CD8-positive, alpha-beta T cell (primary cell): ENCODE measurements at regions of chr2 and their contacts with region 1.

Region 1: DNA sequence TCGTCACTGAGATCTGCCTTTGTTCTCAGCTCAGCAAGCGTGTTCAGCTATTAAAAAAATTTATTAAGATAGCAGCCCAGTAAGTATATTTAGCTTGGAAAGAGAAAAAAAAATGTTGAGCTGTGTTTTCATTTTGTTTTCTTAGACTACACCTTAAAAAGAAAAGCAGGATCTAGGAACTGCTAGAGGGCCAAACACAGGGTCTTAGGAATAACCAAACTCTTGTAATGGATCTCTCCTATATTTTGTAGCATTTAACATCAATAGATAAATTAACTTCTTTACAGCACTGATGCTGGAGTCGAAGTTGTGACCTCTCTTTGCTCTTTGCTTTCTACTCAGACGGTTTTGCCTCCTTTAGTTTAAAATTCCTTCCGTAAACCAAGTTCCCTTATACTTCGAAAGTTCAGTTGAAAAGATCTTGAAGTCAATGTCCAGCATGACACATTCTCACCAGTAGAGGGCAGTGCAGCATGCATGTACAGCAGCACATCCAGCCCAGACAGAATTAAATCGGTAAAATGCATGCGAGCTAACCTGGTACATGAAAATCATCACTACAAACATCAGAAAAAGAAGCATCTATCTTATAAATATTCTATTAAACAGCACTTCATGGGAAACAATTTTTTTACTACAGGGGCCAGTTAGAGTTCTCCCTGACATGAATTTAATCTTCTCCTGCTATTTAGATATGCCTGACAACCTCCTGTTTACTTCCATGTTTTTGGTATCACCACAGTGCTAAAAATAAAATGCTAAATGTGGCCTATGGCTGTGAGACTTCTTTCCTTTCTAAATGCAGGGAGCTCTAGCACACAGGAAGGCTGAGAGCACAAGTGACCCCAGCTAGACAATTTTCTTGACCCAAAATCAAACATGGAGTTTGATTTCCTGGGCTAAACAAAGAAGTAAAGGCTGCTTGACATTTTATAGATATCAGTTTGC is 48.2 kb upstream of the MAP3K20 start:
- DNase-seq: peak; percentile 39 to 84 (median 76)
- ATAC-seq: peak; percentile 79
- H3K4me3 ChIP-seq: no peak overlapping the region
- H3K4me3 Mint-ChIP-seq: no peak overlapping the region
- H3K27ac ChIP-seq: no peak overlapping the region
- H3K27ac Mint-ChIP-seq: no peak overlapping the region
- H3K4me1 ChIP-seq: no peaks in the 10 kb centered on the region
- H3K4me1 Mint-ChIP-seq: peaks cover 3% of the 10 kb centered on the region
- H3K27me3 ChIP-seq: peaks cover 0 to 2% of the 10 kb centered on the region in 2 experiments
- H3K27me3 Mint-ChIP-seq: peaks cover 5% of the 10 kb centered on the region
- CTCF ChIP-seq: peak; percentile 96

Region 2: GRCh38 chr2:172864182-172864581 is 163.3 kb before region 1 on chr2:
- CTCF ChIA-PET with region 1: no interaction called
- POLR2A ChIA-PET with region 1: no interaction called
- intact Hi-C with region 1: loop called in 1 of 2 experiments (anchors 5 kb)
- DNase-seq: peak in 5 of 9 experiments; percentile 6 to 52 (median 27)
- ATAC-seq: no peak
- H3K4me3 ChIP-seq: no peak overlapping the region
- H3K4me3 Mint-ChIP-seq: no peak overlapping the region
- H3K27ac ChIP-seq: no peak overlapping the region
- H3K27ac Mint-ChIP-seq: no peak overlapping the region
- H3K4me1 ChIP-seq: no peaks in the 10 kb centered on the region
- H3K4me1 Mint-ChIP-seq: no peaks in the 10 kb centered on the region
- H3K27me3 ChIP-seq: no peaks in the 10 kb centered on the region
- H3K27me3 Mint-ChIP-seq: peaks cover 16% of the 10 kb centered on the region
- CTCF ChIP-seq: no peak

Region 3: DNA sequence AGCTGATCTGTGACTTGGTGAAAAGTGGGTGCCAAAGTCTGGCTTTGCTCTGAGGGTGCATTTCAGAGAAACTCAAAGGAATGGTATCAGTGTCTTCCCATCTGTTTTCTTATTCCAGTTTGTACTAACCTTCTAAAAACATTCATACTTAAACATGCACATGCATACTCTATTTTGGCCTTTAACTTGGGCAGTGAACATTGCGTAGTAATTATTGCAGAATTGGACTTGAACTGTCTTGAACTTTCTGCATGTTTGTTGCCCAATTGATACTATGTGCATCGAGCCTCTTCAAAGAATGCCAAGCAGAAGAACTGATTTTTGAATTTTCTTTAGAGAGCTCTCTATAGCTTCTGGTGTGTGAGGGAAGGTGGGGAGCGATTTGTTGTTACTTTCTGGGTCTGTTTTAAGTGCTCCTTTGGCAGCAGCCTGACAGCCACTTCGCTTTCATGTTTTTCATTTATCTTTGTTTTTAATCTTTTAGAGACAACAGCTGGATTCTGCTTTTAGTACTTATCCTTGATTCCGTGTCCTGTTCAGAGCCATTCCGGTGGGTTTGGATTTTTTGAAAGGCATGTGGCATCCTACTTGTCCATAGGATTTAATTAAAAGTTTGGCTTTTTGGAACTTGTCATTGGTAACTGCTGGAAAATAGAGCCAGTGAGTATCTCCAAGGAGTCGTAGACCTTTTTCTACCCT is 132.6 kb before region 1 on chr2:
- CTCF ChIA-PET with region 1: no interaction called
- POLR2A ChIA-PET with region 1: no interaction called
- intact Hi-C with region 1: no loop called
- DNase-seq: no peak
- ATAC-seq: no peak
- H3K4me3 ChIP-seq: no peak overlapping the region
- H3K4me3 Mint-ChIP-seq: no peak overlapping the region
- H3K27ac ChIP-seq: no peak overlapping the region
- H3K27ac Mint-ChIP-seq: no peak overlapping the region
- H3K4me1 ChIP-seq: no peaks in the 10 kb centered on the region
- H3K4me1 Mint-ChIP-seq: peaks cover 2% of the 10 kb centered on the region
- H3K27me3 ChIP-seq: no peaks in the 10 kb centered on the region
- H3K27me3 Mint-ChIP-seq: peaks cover 20% of the 10 kb centered on the region
- CTCF ChIP-seq: no peak

Region 4: GRCh38 chr2:173002751-173003541 is 24.5 kb before region 1 on chr2:
- CTCF ChIA-PET with region 1: interaction called, 10 read pairs
- POLR2A ChIA-PET with region 1: no interaction called
- intact Hi-C with region 1: no loop called
- DNase-seq: no peak
- ATAC-seq: no peak
- H3K4me3 ChIP-seq: no peak overlapping the region
- H3K4me3 Mint-ChIP-seq: no peak overlapping the region
- H3K27ac ChIP-seq: no peak overlapping the region
- H3K27ac Mint-ChIP-seq: no peak overlapping the region
- H3K4me1 ChIP-seq: no peaks in the 10 kb centered on the region
- H3K4me1 Mint-ChIP-seq: no peaks in the 10 kb centered on the region
- H3K27me3 ChIP-seq: no peaks in the 10 kb centered on the region
- H3K27me3 Mint-ChIP-seq: peaks cover 9% of the 10 kb centered on the region
- CTCF ChIP-seq: no peak

Region 5: GRCh38 chr2:173043476-173043875 is 16.0 kb after region 1 on chr2:
- CTCF ChIA-PET with region 1: interaction called, 22 read pairs
- POLR2A ChIA-PET with region 1: no interaction called
- intact Hi-C with region 1: no loop called
- DNase-seq: peak in 1 of 9 experiments; percentile 28
- ATAC-seq: no peak
- H3K4me3 ChIP-seq: no peak overlapping the region
- H3K4me3 Mint-ChIP-seq: no peak overlapping the region
- H3K27ac ChIP-seq: no peak overlapping the region
- H3K27ac Mint-ChIP-seq: no peak overlapping the region
- H3K4me1 ChIP-seq: no peaks in the 10 kb centered on the region
- H3K4me1 Mint-ChIP-seq: no peaks in the 10 kb centered on the region
- H3K27me3 ChIP-seq: no peaks in the 10 kb centered on the region
- H3K27me3 Mint-ChIP-seq: no peaks in the 10 kb centered on the region
- CTCF ChIP-seq: no peak

Region 6: DNA sequence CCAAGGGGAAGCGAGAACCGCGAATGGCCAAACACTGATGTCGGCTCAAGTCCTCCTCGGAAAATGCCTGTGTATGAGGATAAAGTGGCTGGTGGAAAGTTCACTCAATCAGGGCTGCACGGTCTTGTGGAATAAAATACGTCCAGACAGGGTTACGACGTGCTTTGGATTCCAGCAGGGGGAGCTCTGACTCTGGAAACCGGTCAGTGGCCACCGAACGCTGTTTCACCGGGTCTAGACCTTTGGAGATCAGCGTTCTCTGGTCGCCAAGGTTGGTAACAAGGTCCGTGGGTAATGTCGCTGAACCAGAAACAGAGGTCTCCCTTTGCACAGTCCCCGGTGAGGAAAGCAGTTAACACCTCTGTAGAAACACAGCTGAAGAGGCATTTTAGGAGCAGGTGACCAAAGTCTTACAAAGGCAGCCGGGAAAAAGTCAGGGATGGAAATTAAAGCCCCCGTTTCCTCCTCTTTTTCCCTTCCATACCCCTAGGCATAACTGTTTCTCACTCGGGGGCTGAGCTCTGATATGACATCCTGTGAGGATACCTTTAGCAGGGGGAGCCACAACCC is 375.0 kb after region 1 on chr2:
- CTCF ChIA-PET with region 1: no interaction called
- POLR2A ChIA-PET with region 1: no interaction called
- intact Hi-C with region 1: loop called in 1 of 2 experiments (anchors 5 kb)
- DNase-seq: peak; percentile 48 to 84 (median 72)
- ATAC-seq: peak; percentile 70
- H3K4me3 ChIP-seq: no peak overlapping the region
- H3K4me3 Mint-ChIP-seq: no peak overlapping the region
- H3K27ac ChIP-seq: no peak overlapping the region
- H3K27ac Mint-ChIP-seq: no peak overlapping the region
- H3K4me1 ChIP-seq: no peaks in the 10 kb centered on the region
- H3K4me1 Mint-ChIP-seq: peaks cover 4% of the 10 kb centered on the region
- H3K27me3 ChIP-seq: peaks cover 5 to 10% of the 10 kb centered on the region in 2 experiments
- H3K27me3 Mint-ChIP-seq: peaks cover 49% of the 10 kb centered on the region
- CTCF ChIP-seq: peak; percentile 68